Activated naive CD4-positive, alpha-beta T cell treated with anti-CD3 and anti-CD28 coated beads for 36 hours (primary cell): ENCODE measurements at regions of chr12 and their contacts with region 1.

Region 1: DNA sequence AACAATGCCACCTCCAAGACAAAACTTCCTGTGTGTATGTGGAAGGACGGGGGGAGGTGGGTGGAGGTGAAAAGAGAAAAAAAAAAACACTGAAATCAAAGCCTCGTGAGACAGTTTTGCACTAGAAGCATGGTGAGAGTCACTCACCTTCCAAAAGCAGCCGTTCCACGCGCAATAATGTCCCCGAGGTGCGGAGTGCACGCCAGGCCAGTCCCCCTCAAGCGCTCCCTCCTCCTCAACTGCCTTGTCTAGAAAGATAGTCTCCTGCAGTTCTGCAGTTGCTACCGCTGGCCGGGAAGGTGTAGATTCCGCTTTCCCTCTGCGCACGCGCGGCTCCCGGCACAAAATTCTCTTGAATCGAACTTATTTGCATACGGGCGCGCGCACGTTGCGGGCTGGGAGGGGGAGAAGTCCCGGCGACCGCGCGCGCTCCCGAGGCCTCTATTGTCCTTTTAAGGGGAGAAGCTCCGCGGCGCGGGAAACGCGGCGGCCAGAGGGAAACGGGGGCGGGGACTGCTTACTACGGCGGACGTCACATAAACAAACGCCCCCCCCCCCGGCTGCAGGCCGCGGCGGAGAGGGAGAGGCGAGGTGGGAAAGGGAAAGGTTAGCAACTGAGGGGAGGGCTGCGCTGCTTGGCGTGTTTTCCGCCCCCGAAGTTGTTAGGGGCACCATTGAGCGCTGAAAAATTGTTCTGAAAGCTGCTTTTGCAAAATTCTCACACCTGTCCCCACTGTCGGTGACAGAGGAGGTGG is at the start of gene SINHCAF:
- DNase-seq: peak; percentile 99
- H3K4me3 Mint-ChIP-seq: peak within 1 kb of the TSS; percentile 96
- H3K27ac Mint-ChIP-seq: peak within 1 kb of the TSS; percentile 99
- H3K4me1 Mint-ChIP-seq: peaks cover 20% of the 10 kb centered on the region
- H3K27me3 Mint-ChIP-seq: no peaks in the 10 kb centered on the region
- total RNA-seq, gene SINHCAF: 158 to 169 TPM

Region 2: DNA sequence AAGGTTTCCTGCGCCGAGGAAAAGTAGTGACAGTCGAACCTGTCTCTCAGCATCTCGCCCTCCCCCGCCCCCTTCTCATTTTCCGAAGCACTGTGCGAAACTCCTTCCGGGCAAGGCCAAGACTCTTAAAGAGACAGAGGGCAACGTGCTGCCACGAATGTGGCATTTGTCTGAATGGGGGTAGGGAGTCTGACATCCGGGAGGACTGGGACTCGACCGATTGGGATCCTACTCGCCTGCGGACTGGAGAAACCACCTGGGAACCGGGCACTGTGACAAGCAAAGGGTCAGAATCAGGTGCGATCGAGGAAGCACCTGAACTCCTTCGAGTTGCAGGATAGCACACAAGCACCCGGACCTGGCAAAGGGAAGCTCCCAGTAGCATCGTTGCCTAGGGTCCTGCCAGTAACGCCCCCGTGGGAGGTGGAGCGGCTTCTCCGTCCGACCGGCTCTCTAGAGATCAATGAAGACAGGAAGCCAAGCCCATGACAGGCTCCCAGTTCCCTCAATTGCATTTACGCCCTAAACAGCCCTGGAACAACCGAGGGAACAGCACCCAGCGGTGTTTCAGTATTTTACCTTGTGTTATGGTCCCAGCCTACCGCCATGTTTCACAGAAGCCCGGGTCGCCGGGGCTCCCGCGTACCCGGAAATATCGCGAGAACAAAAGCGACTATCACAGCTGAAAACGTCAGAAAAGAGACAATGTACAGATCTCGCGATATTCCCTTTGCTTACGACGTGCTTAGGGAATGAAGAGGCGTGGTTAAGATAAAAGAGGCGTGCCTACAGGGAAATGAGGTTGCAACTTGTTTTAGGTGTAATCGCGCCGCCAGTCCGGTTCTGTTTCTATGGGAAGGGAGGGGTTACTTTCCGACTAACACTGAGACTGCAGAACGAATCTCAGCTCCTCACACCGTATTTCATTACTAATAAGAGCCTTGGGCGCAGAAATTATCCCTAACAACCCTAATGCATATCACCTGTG is 1945.2 kb before region 1 on chr12 and contains the start of gene ERGIC2:
- CTCF ChIA-PET with region 1: no interaction called
- intact Hi-C with region 1: loop called (anchors 5 kb)
- DNase-seq: peak; percentile 95
- H3K4me3 Mint-ChIP-seq: peak within 1 kb of the TSS; percentile 95
- H3K27ac Mint-ChIP-seq: peak within 1 kb of the TSS; percentile 96
- H3K4me1 Mint-ChIP-seq: peaks cover 47% of the 10 kb centered on the region
- H3K27me3 Mint-ChIP-seq: no peaks in the 10 kb centered on the region
- total RNA-seq, gene ERGIC2: 112 to 116 TPM

Region 3: GRCh38 chr12:30754709-30755394 is 571.2 kb before region 1 on chr12 and contains the start of gene CAPRIN2:
- CTCF ChIA-PET with region 1: no interaction called
- intact Hi-C with region 1: loop called (anchors 2 kb)
- DNase-seq: peak; percentile 95
- H3K4me3 Mint-ChIP-seq: peak within 1 kb of the TSS; percentile 94
- H3K27ac Mint-ChIP-seq: peak within 1 kb of the TSS; percentile 51
- H3K4me1 Mint-ChIP-seq: peaks cover 38% of the 10 kb centered on the region
- H3K27me3 Mint-ChIP-seq: no peaks in the 10 kb centered on the region
- total RNA-seq, gene CAPRIN2: 10.3 to 11.3 TPM

Region 4: GRCh38 chr12:31362759-31363415 is 36.8 kb after region 1 on chr12:
- CTCF ChIA-PET with region 1: interaction called, 3 read pairs
- intact Hi-C with region 1: loop called (anchors 2 kb)
- DNase-seq: peak; percentile 53
- H3K4me3 Mint-ChIP-seq: peak overlapping the region; percentile 38
- H3K27ac Mint-ChIP-seq: no peak overlapping the region
- H3K4me1 Mint-ChIP-seq: peaks cover 14% of the 10 kb centered on the region
- H3K27me3 Mint-ChIP-seq: no peaks in the 10 kb centered on the region

Region 5: GRCh38 chr12:32025906-32026305 is 699.9 kb after region 1 on chr12:
- CTCF ChIA-PET with region 1: no interaction called
- intact Hi-C with region 1: loop called (anchors 10 kb)
- DNase-seq: peak; percentile 84
- H3K4me3 Mint-ChIP-seq: no peak overlapping the region
- H3K27ac Mint-ChIP-seq: peak overlapping the region; percentile 81
- H3K4me1 Mint-ChIP-seq: peaks cover 24% of the 10 kb centered on the region
- H3K27me3 Mint-ChIP-seq: no peaks in the 10 kb centered on the region

Region 6: DNA sequence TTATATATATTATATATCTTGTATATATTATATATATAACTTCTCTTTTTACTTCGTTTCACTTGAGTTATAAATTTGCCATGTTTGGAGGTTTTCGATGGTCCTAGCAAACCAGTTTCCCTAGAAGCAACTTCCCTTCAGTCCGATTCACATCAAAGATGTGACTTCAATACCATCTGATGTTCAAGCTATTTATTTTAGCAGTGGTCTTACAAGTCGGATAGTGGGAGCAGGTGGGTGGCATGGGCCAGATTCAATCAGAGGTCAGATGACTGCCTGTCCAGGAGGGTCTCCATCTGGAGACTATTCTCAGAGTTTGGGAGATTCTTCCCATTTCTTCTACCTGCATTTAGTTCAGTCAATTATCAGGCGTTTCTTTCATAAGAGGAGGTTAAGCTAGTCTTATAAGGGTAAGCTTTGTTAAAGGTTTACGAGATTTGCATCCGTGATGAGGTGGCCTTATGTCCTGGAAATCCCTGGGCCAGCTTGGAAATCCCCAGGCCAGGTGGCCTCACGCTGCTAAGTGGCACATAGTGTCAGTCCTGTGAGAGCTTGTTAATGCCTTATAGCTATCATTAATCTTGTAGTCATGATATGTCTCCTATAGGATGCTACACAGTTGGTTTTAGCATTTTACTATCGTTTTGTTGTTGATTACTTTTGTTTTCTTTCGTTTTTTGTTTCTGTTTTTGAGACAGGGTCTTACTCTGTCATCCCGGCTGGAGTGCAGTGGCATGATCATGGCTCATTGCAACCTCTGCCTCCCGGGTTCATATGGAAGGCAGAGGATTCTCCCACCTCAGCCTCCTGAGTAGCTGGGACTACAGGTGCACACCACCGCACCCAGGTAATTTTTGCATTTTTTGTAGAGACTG is 926.4 kb after region 1 on chr12:
- CTCF ChIA-PET with region 1: no interaction called
- intact Hi-C with region 1: loop called (anchors 10 kb)
- DNase-seq: no peak
- H3K4me3 Mint-ChIP-seq: no peak overlapping the region
- H3K27ac Mint-ChIP-seq: no peak overlapping the region
- H3K4me1 Mint-ChIP-seq: peaks cover 2% of the 10 kb centered on the region
- H3K27me3 Mint-ChIP-seq: no peaks in the 10 kb centered on the region